Caco-2 (cell line): ENCODE measurements at regions of chr7 and their contacts with region 1.

Region 1: GRCh38 chr7:101153969-101154692 is at the start of gene AP1S1:
- DNase-seq: peak; percentile 96 to 98
- H3K4me3 ChIP-seq: peak within 1 kb of the TSS; percentile 87
- H3K4me3 Mint-ChIP-seq: peak within 1 kb of the TSS; percentile 81
- H3K27ac Mint-ChIP-seq: peak within 1 kb of the TSS; percentile 94
- H3K4me1 ChIP-seq: peaks cover 14% of the 10 kb centered on the region; the same call in 1 of the 2 replicates
- H3K4me1 Mint-ChIP-seq: peaks cover 27% of the 10 kb centered on the region
- H3K27me3 ChIP-seq: no peaks in the 10 kb centered on the region
- H3K27me3 Mint-ChIP-seq: peaks cover 10% of the 10 kb centered on the region
- CTCF ChIP-seq: no peak
- total RNA-seq, gene AP1S1: 52.3 and 62.9 TPM in 2 replicates

Region 2: GRCh38 chr7:101093906-101094305 is 60.2 kb before region 1 on chr7:
- CTCF ChIA-PET with region 1: no interaction called
- POLR2A ChIA-PET with region 1: no interaction called
- intact Hi-C with region 1: no loop called
- DNase-seq: no peak
- H3K4me3 ChIP-seq: no peak overlapping the region
- H3K4me3 Mint-ChIP-seq: no peak overlapping the region
- H3K27ac Mint-ChIP-seq: no peak overlapping the region
- H3K4me1 ChIP-seq: no peaks in the 10 kb centered on the region
- H3K4me1 Mint-ChIP-seq: peaks cover 6% of the 10 kb centered on the region
- H3K27me3 ChIP-seq: no peaks in the 10 kb centered on the region
- H3K27me3 Mint-ChIP-seq: no peaks in the 10 kb centered on the region
- CTCF ChIP-seq: no peak

Region 3: DNA sequence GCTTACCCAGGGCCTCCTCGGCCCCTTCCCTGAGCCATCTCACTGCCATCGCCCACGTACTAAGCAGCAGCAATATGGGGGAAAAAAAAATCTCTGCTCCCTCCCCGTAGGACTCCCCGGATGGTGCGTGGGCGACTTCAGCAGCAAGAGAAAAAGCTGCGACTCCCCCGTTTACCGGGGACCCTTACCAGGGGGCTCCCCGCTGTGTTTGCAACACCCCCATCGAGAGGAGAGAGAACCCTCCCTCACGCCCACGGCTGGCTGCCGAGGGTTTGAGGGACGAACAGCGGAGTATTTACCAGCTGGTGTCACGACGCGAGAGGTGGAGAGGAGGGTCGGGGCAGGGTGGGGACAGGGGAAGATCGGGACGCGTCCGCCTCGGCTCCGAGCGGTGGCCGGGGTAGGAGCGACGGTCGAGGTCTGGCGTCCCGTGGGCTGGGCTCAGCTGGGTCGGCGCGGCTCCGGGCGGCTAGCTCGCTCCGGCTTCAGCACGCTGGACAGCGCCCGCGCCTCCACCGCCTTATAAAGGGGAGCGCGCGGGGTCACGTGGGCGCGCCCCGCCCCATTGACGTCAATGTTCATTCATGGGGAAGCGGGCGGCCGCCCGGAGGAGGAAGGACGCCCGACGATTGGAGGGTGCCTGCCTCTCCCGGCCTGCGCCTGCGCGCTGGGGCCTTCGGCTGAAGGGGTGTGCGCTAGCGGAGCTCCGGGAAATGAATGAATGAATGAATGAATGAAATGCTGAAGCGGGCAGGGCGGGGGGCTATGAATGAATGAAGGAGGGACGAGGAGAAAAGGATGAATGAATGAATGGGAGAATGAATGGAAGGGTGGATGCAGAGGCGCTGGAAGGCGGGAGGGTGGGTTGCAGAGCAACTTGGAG is 11.2 kb after region 1 on chr7 and contains the start of gene VGF:
- CTCF ChIA-PET with region 1: no interaction called
- POLR2A ChIA-PET with region 1: no interaction called
- intact Hi-C with region 1: loop called (anchors 1 kb)
- DNase-seq: peak; percentile 95 to 96
- H3K4me3 ChIP-seq: peak within 1 kb of the TSS; percentile 63
- H3K4me3 Mint-ChIP-seq: peak within 1 kb of the TSS; percentile 74
- H3K27ac Mint-ChIP-seq: no peak within 1 kb of the TSS
- H3K4me1 ChIP-seq: peaks cover 38% of the 10 kb centered on the region
- H3K4me1 Mint-ChIP-seq: peaks cover 31% of the 10 kb centered on the region
- H3K27me3 ChIP-seq: peaks cover under 1% of the 10 kb centered on the region
- H3K27me3 Mint-ChIP-seq: peaks cover 32% of the 10 kb centered on the region
- CTCF ChIP-seq: no peak
- total RNA-seq, gene VGF: 1.2 and 1.3 TPM in 2 replicates